CD8-positive, alpha-beta T cell (primary cell): ENCODE measurements at regions of chr21 and their contacts with region 1.

Region 1: GRCh38 chr21:32770871-32771523 is 558 bp downstream of the PAXBP1 start:
- DNase-seq: peak in 5 of 9 experiments; percentile 26 to 59 (median 51)
- ATAC-seq: peak; percentile 15
- H3K4me3 ChIP-seq: peak overlapping the region; percentile 69 to 82
- H3K4me3 Mint-ChIP-seq: peak overlapping the region; percentile 96
- H3K27ac ChIP-seq: peak overlapping the region; percentile 69 to 75
- H3K27ac Mint-ChIP-seq: peak overlapping the region; percentile 87
- H3K4me1 ChIP-seq: peaks cover 42% of the 10 kb centered on the region
- H3K4me1 Mint-ChIP-seq: peaks cover 66% of the 10 kb centered on the region
- H3K27me3 ChIP-seq: no peaks in the 10 kb centered on the region
- H3K27me3 Mint-ChIP-seq: no peaks in the 10 kb centered on the region
- CTCF ChIP-seq: no peak

Region 2: DNA sequence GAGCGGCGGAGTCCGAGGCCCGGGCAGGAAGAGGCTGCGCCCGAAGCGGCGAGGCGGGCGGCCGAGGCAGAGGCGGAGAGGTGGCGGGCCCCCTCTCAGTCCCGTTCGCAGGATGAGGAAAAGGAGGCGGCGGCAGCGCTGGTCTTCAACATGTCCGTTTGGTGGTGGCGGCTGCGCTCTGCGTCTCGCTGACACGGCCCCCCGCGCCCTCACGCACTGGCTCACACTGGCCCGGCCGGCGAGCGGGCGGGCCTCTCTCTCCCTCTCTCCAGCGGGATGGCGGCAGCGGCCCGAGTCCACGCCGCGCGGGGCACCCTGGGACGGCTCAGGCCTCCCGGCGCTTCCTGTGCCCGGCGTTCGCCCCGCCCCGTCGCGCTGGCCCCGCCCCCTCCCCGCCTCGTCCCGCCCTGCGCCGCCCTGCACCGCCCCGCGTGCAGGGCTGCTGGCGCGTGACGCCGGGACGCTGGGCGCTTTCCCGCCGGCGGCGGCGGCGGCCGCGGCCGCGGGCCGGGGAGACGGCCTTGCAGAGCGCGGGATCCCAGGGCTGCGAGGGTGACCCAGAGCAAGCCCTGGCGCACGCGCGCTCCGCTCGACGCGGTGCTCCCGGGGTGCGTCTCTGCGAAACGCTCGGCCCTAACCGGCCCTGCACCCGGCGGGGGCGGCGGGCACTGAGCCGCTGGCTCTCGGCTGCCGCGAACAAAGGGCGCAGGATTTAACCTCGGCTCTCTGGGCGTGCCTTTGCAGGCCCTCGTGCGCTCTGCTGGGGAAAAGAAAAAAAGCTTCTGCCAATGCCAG is 1039.0 kb before region 1 on chr21 and contains the start of gene SCAF4:
- CTCF ChIA-PET with region 1: no interaction called
- POLR2A ChIA-PET with region 1: no interaction called
- intact Hi-C with region 1: loop called in 1 of 2 experiments (anchors 2 kb)
- DNase-seq: peak; percentile 58 to 89 (median 74)
- ATAC-seq: peak; percentile 87
- H3K4me3 ChIP-seq: peak within 1 kb of the TSS; percentile 73 to 93
- H3K4me3 Mint-ChIP-seq: peak within 1 kb of the TSS; percentile 90
- H3K27ac ChIP-seq: peak within 1 kb of the TSS; percentile 82 to 83
- H3K27ac Mint-ChIP-seq: peak within 1 kb of the TSS; percentile 84
- H3K4me1 ChIP-seq: peaks cover 50% of the 10 kb centered on the region
- H3K4me1 Mint-ChIP-seq: peaks cover 14% of the 10 kb centered on the region
- H3K27me3 ChIP-seq: no peaks in the 10 kb centered on the region
- H3K27me3 Mint-ChIP-seq: no peaks in the 10 kb centered on the region
- CTCF ChIP-seq: no peak
- total RNA-seq, gene SCAF4: 53.0 to 53.4 TPM

Region 3: GRCh38 chr21:32392880-32393676 is 377.9 kb before region 1 on chr21 and contains the start of gene URB1:
- CTCF ChIA-PET with region 1: no interaction called
- POLR2A ChIA-PET with region 1: no interaction called
- intact Hi-C with region 1: loop called in 1 of 2 experiments (anchors 2 kb)
- DNase-seq: peak; percentile 89 to 98 (median 94)
- ATAC-seq: peak; percentile 97
- H3K4me3 ChIP-seq: peak within 1 kb of the TSS; percentile 94 to 98
- H3K4me3 Mint-ChIP-seq: peak within 1 kb of the TSS; percentile 89
- H3K27ac ChIP-seq: peak within 1 kb of the TSS; percentile 65 to 83
- H3K27ac Mint-ChIP-seq: peak within 1 kb of the TSS; percentile 80
- H3K4me1 ChIP-seq: peaks cover 13% of the 10 kb centered on the region
- H3K4me1 Mint-ChIP-seq: peaks cover 50% of the 10 kb centered on the region
- H3K27me3 ChIP-seq: no peaks in the 10 kb centered on the region
- H3K27me3 Mint-ChIP-seq: peaks cover 7% of the 10 kb centered on the region
- CTCF ChIP-seq: no peak
- total RNA-seq, gene URB1: 5.4 to 5.9 TPM

Region 4: DNA sequence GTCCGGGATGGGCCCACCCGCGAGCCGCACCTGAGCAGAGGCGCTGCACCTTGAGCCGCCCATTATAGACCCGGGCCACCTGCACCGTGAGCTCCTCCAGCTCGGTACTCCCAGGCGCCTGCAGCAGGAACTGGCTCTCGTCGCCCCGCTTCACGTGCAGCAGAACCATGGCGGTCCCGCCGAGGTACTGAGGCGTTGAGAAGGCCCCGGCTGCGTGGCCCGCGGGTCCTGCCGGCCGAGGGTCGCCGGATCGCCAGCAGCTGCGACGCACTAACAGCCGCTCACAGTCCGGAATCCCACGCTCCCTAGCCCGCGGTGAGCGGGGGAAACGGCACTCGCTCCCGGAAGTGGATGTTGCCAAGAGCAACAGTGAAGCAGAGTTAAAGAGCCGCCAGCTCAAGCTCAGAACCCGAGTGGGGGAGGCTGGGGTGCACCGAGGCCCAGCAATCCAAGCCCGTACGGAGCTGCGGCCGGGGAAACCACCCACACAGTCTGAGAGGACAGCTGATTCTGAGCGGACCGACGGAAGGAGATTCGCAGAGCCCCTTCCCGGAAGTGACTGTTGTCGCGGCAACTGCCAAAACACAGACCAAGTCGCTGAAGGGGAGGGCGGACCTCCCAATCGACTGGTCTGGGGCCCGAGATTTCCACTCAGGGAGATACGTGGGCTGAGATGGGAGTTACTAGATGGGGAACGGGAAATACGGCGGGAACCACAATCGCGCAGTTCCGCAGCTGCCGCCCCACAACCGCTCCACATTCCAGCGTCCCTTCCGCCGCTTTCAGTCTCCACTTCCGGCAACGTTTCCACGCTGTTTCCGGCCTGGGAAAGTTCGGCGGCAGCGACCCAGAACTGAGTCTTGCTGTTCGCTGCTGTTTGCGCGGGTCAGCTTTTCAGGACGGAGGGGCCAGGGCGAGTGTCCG is 158.7 kb before region 1 on chr21 and contains the start of gene CFAP298:
- CTCF ChIA-PET with region 1: no interaction called
- POLR2A ChIA-PET with region 1: interaction called, 13 read pairs
- intact Hi-C with region 1: loop called (anchors 1 kb)
- DNase-seq: peak; percentile 76 to 98 (median 88)
- ATAC-seq: peak; percentile 91
- H3K4me3 ChIP-seq: peak within 1 kb of the TSS; percentile 65 to 74
- H3K4me3 Mint-ChIP-seq: peak within 1 kb of the TSS; percentile 96
- H3K27ac ChIP-seq: peak within 1 kb of the TSS; percentile 79 to 96
- H3K27ac Mint-ChIP-seq: peak within 1 kb of the TSS; percentile 97
- H3K4me1 ChIP-seq: peaks cover 21% of the 10 kb centered on the region
- H3K4me1 Mint-ChIP-seq: peaks cover 27% of the 10 kb centered on the region
- H3K27me3 ChIP-seq: no peaks in the 10 kb centered on the region
- H3K27me3 Mint-ChIP-seq: no peaks in the 10 kb centered on the region
- CTCF ChIP-seq: no peak
- total RNA-seq, gene CFAP298: 7.5 to 9.1 TPM

Region 5: GRCh38 chr21:32753818-32754610 is 17.0 kb before region 1 on chr21:
- CTCF ChIA-PET with region 1: interaction called, 4 read pairs
- POLR2A ChIA-PET with region 1: interaction called, 36 read pairs
- intact Hi-C with region 1: no loop called
- DNase-seq: no peak
- ATAC-seq: no peak
- H3K4me3 ChIP-seq: no peak overlapping the region
- H3K4me3 Mint-ChIP-seq: no peak overlapping the region
- H3K27ac ChIP-seq: no peak overlapping the region
- H3K27ac Mint-ChIP-seq: no peak overlapping the region
- H3K4me1 ChIP-seq: no peaks in the 10 kb centered on the region
- H3K4me1 Mint-ChIP-seq: peaks cover 6% of the 10 kb centered on the region
- H3K27me3 ChIP-seq: no peaks in the 10 kb centered on the region
- H3K27me3 Mint-ChIP-seq: no peaks in the 10 kb centered on the region
- CTCF ChIP-seq: no peak

Region 6: GRCh38 chr21:32929633-32930038 is 158.6 kb after region 1 on chr21:
- CTCF ChIA-PET with region 1: no interaction called
- POLR2A ChIA-PET with region 1: no interaction called
- intact Hi-C with region 1: loop called in 1 of 2 experiments (anchors 5 kb)
- DNase-seq: no peak
- ATAC-seq: no peak
- H3K4me3 ChIP-seq: no peak overlapping the region
- H3K4me3 Mint-ChIP-seq: peak overlapping the region; percentile 8
- H3K27ac ChIP-seq: peak overlapping the region in 1 of 2 experiments; percentile 57
- H3K27ac Mint-ChIP-seq: peak overlapping the region; percentile 7
- H3K4me1 ChIP-seq: peaks cover 34% of the 10 kb centered on the region
- H3K4me1 Mint-ChIP-seq: peaks cover 36% of the 10 kb centered on the region
- H3K27me3 ChIP-seq: no peaks in the 10 kb centered on the region
- H3K27me3 Mint-ChIP-seq: no peaks in the 10 kb centered on the region
- CTCF ChIP-seq: no peak

Region 7: GRCh38 chr21:33514229-33514628 is 743.2 kb after region 1 on chr21:
- CTCF ChIA-PET with region 1: no interaction called
- POLR2A ChIA-PET with region 1: no interaction called
- intact Hi-C with region 1: no loop called
- DNase-seq: no peak
- ATAC-seq: no peak
- H3K4me3 ChIP-seq: no peak overlapping the region
- H3K4me3 Mint-ChIP-seq: no peak overlapping the region
- H3K27ac ChIP-seq: no peak overlapping the region
- H3K27ac Mint-ChIP-seq: no peak overlapping the region
- H3K4me1 ChIP-seq: no peaks in the 10 kb centered on the region
- H3K4me1 Mint-ChIP-seq: no peaks in the 10 kb centered on the region
- H3K27me3 ChIP-seq: no peaks in the 10 kb centered on the region
- H3K27me3 Mint-ChIP-seq: no peaks in the 10 kb centered on the region
- CTCF ChIP-seq: no peak

Region 8: DNA sequence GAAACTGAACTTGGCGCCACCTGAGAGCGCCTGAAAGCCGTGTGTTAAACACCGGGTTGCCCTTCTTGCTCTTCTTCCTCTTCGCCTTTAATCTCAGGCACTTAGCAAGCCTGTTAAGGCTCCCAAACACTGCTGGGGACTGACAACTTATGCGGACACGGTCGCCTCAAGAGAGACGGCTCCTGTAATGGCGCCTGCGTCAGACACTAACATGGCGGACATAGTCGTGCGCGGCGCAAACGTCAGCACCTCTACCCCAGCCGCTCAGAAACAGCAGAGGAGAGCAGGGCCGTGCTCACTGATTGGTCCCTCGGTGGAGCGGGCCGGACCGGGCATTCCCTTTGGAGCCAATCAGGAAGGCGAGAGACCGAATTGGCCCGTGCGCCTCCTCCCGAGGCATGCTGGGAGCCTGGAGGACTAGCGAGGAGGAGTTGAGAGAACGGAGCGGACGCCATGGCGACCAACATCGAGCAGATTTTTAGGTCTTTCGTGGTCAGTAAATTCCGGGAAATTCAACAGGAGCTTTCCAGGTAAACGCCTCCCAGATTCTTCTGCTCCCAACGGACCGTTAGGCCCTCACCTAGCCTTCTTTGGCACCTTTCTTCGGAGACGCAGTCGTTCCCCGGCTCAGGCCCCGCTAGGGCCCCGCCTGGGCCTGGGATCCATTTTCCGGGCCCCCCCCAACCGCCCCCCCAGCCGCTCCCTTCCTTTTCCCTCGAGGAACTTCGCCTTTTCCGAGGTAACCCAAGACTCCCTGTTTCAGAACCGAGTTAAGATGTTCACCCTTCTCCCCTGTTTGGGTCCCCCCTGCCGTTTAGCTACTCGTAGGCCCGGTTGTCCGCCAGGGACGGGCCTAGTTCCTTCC is 771.9 kb after region 1 on chr21 and contains the start of gene SON:
- CTCF ChIA-PET with region 1: no interaction called
- POLR2A ChIA-PET with region 1: interaction called, 10 read pairs
- intact Hi-C with region 1: loop called (anchors 1 kb)
- DNase-seq: peak; percentile 93 to 99 (median 96)
- ATAC-seq: peak; percentile 89
- H3K4me3 ChIP-seq: peak within 1 kb of the TSS; percentile 87 to 88
- H3K4me3 Mint-ChIP-seq: peak within 1 kb of the TSS; percentile 96
- H3K27ac ChIP-seq: peak within 1 kb of the TSS; percentile 99
- H3K27ac Mint-ChIP-seq: peak within 1 kb of the TSS; percentile 99
- H3K4me1 ChIP-seq: peaks cover 44% of the 10 kb centered on the region
- H3K4me1 Mint-ChIP-seq: peaks cover 55% of the 10 kb centered on the region
- H3K27me3 ChIP-seq: no peaks in the 10 kb centered on the region
- H3K27me3 Mint-ChIP-seq: no peaks in the 10 kb centered on the region
- CTCF ChIP-seq: no peak
- total RNA-seq, gene SON: 418 to 422 TPM